ENCODE measurements at regions of chr10 and their contacts with region 1.

Region 1: GRCh38 chr10:73848821-73849489 is 25.4 kb downstream of the CAMK2G start:
- DNase-seq: peak; percentile 94
- H3K4me3 Mint-ChIP-seq: peak overlapping the region; percentile 23
- H3K27ac Mint-ChIP-seq: peak overlapping the region; percentile 74
- H3K4me1 Mint-ChIP-seq: peaks cover 11% of the 10 kb centered on the region
- H3K27me3 Mint-ChIP-seq: no peaks in the 10 kb centered on the region

Region 2: DNA sequence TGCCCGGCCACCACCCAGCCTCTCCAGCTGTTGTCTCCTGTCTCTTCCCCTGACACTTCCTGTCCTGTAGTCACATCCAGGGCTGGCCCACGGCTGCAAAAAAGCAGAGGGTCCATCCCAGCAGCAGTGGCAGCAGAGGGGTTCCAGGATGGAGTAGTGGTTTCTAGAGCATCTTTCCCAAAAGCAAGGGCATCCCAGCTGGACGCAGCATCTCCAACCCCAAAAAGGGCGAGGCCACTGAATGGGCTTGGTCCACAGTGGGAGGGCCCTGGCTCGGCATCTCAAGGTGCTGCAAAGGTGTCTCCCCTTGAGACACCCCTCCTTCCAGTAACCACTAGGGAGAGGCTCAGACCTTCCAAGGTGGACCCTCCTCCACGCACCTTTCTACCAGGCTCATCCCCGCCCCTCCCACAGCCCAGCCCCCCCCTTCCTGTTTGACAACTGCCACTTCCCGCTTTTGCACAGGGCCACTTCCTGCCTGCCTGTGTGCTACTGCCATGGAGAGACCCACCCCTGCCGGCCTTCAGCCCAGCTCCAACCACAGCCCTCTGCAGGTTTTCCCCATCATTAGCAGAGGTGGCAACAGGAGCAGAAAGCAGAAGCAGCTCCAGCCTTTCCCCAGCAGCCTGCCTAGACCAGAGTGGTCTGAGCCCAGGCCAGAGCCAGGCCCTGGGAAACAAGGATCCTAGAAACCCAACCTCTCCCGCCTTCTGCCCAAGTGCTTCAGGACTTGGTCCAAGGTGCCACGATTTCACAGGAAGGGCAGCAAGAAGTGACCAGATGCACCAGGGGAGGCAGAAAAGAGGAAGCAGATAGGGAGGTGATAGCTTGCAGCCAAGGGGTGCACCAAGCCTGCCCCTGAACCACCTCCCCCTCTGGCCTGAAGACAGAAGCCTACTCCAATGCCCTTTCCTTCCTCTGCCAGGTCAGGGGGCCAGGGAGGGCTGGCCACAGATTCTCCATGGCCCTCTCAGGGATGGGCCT is 16.8 kb after region 1 on chr10:
- CTCF ChIA-PET with region 1: interaction called, 31 read pairs
- POLR2A ChIA-PET with region 1: no interaction called
- intact Hi-C with region 1: loop called (anchors 1 kb)
- DNase-seq: peak; percentile 77
- H3K4me3 Mint-ChIP-seq: peak overlapping the region; percentile 79
- H3K27ac Mint-ChIP-seq: peak overlapping the region; percentile 99
- H3K4me1 Mint-ChIP-seq: peaks cover 64% of the 10 kb centered on the region
- H3K27me3 Mint-ChIP-seq: no peaks in the 10 kb centered on the region

Region 3: GRCh38 chr10:73874267-73875138 is 25.5 kb after region 1 on chr10 and contains the start of gene CAMK2G:
- CTCF ChIA-PET with region 1: interaction called, 486 read pairs
- POLR2A ChIA-PET with region 1: interaction called, 4 read pairs
- intact Hi-C with region 1: loop called (anchors 1 kb)
- DNase-seq: peak; percentile 89
- H3K4me3 Mint-ChIP-seq: peak within 1 kb of the TSS; percentile 78
- H3K27ac Mint-ChIP-seq: peak within 1 kb of the TSS; percentile 66
- H3K4me1 Mint-ChIP-seq: peaks cover 54% of the 10 kb centered on the region
- H3K27me3 Mint-ChIP-seq: no peaks in the 10 kb centered on the region
- total RNA-seq, gene CAMK2G: 20.8 to 21.5 TPM

Measured in activated CD4-positive, alpha-beta memory T cell treated with anti-CD3 and anti-CD28 coated beads for 36 hours (primary cell).